CD8-positive, alpha-beta T cell (primary cell): ENCODE measurements at regions of chrX and their contacts with region 1.

Region 1: DNA sequence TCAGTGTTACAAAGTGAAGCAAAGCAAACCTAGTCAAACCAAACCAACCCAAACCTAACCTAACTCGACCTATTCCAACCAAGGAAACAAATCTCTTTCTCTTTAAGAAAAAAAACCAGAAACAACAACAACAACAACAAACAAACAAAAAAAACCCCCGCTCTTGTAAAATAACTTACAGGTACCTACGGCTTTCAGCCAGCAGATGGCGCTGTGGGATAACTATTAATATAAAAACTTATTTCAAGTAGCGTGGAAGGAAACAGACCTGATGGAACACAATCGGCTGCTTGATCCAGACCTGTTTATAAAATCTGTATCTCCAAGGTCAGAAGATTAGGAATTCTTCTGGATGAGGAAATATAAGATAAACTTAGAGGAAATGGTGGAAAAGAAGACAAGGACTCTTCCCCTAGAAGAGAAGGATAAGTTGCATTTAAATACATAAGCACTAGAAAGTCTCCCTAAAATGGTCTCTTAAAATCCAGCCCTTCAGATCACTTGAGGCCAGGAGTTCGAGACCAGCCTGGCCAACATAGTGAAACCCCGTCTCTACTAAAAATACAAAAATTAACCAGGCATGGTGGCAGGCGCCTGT is 34.4 kb upstream of the CDKL5 start:
- DNase-seq: peak; percentile 16 to 80 (median 65)
- ATAC-seq: peak; percentile 42
- H3K4me3 ChIP-seq: no peak overlapping the region
- H3K4me3 Mint-ChIP-seq: no peak overlapping the region
- H3K27ac ChIP-seq: no peak overlapping the region
- H3K27ac Mint-ChIP-seq: no peak overlapping the region
- H3K4me1 ChIP-seq: no peaks in the 10 kb centered on the region
- H3K4me1 Mint-ChIP-seq: peaks cover 2% of the 10 kb centered on the region
- H3K27me3 ChIP-seq: no peaks in the 10 kb centered on the region
- H3K27me3 Mint-ChIP-seq: no peaks in the 10 kb centered on the region
- CTCF ChIP-seq: peak; percentile 64

Region 2: DNA sequence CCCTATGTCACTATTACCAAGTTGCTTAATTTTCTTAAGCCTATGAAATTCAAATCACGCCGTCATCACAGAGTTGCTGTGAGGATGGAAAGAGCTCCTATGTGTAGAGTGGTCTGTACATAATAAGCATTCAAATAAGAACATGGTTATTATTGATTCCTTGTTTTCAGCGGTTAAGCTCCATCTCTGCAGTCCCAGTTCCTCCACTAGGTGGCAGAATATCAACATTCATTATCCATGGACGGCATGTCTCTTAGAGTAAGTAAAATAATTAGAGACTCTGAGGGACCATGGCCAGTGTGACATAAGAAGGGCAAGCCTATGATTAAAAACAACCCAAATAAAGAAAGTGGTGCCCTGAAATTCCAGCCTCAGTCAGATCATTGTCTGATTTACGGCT is 1148.6 kb before region 1 on chrX:
- CTCF ChIA-PET with region 1: no interaction called
- POLR2A ChIA-PET with region 1: no interaction called
- intact Hi-C with region 1: loop called in 1 of 2 experiments (anchors 5 kb)
- DNase-seq: peak in 3 of 9 experiments; percentile 18 to 47 (median 31)
- ATAC-seq: no peak
- H3K4me3 ChIP-seq: no peak overlapping the region
- H3K4me3 Mint-ChIP-seq: no peak overlapping the region
- H3K27ac ChIP-seq: no peak overlapping the region
- H3K27ac Mint-ChIP-seq: no peak overlapping the region
- H3K4me1 ChIP-seq: no peaks in the 10 kb centered on the region
- H3K4me1 Mint-ChIP-seq: no peaks in the 10 kb centered on the region
- H3K27me3 ChIP-seq: no peaks in the 10 kb centered on the region
- H3K27me3 Mint-ChIP-seq: no peaks in the 10 kb centered on the region
- CTCF ChIP-seq: peak; percentile 56

Region 3: GRCh38 chrX:18047491-18047890 is 343.5 kb before region 1 on chrX:
- CTCF ChIA-PET with region 1: no interaction called
- POLR2A ChIA-PET with region 1: no interaction called
- intact Hi-C with region 1: no loop called
- DNase-seq: no peak
- ATAC-seq: no peak
- H3K4me3 ChIP-seq: no peak overlapping the region
- H3K4me3 Mint-ChIP-seq: no peak overlapping the region
- H3K27ac ChIP-seq: no peak overlapping the region
- H3K27ac Mint-ChIP-seq: no peak overlapping the region
- H3K4me1 ChIP-seq: no peaks in the 10 kb centered on the region
- H3K4me1 Mint-ChIP-seq: no peaks in the 10 kb centered on the region
- H3K27me3 ChIP-seq: no peaks in the 10 kb centered on the region
- H3K27me3 Mint-ChIP-seq: no peaks in the 10 kb centered on the region
- CTCF ChIP-seq: no peak

Region 4: GRCh38 chrX:18886344-18887161 is 495.5 kb after region 1 on chrX:
- CTCF ChIA-PET with region 1: no interaction called
- POLR2A ChIA-PET with region 1: no interaction called
- intact Hi-C with region 1: loop called in 1 of 2 experiments (anchors 5 kb)
- DNase-seq: peak; percentile 2 to 67 (median 31)
- ATAC-seq: peak; percentile 47
- H3K4me3 ChIP-seq: peak overlapping the region; percentile 58 to 64
- H3K4me3 Mint-ChIP-seq: peak overlapping the region; percentile 88
- H3K27ac ChIP-seq: peak overlapping the region; percentile 14 to 69
- H3K27ac Mint-ChIP-seq: peak overlapping the region; percentile 91
- H3K4me1 ChIP-seq: peaks cover 27% of the 10 kb centered on the region
- H3K4me1 Mint-ChIP-seq: peaks cover 33% of the 10 kb centered on the region
- H3K27me3 ChIP-seq: no peaks in the 10 kb centered on the region
- H3K27me3 Mint-ChIP-seq: no peaks in the 10 kb centered on the region
- CTCF ChIP-seq: peak; percentile 33

Region 5: DNA sequence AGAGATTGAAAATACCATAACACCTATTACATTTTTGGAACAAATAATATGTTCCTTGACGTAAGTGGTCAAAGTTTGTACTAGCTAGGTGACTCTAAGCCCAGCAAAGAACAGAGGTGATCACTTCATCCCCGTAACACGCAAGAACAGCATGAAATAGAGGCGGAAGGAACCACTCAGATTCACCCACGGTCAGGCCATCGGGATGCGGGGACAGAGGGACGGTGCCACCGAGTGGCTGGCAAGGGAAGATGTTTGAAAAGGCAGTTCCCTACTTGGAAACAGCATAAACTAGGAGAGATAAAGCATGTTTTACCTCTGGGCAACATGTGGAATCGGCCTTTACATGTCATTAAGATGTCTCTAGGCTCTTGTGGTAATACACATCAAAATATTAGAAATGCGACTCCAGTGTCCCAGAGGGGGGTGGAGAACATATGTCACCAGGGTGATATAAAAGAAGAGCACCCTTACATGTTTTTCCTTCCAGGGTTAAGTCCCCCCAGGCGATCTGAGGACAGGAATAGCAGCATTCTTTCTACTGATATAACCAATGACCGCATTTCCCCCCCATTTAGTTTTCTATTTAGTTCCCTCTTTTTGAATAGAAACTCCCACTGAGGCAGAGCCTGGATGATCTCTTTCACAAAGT is 508.9 kb after region 1 on chrX:
- CTCF ChIA-PET with region 1: interaction called, 4 read pairs
- POLR2A ChIA-PET with region 1: no interaction called
- intact Hi-C with region 1: loop called (anchors 1 to 2 kb)
- DNase-seq: peak in 1 of 9 experiments; percentile 15
- ATAC-seq: no peak
- H3K4me3 ChIP-seq: no peak overlapping the region
- H3K4me3 Mint-ChIP-seq: no peak overlapping the region
- H3K27ac ChIP-seq: no peak overlapping the region
- H3K27ac Mint-ChIP-seq: no peak overlapping the region
- H3K4me1 ChIP-seq: no peaks in the 10 kb centered on the region
- H3K4me1 Mint-ChIP-seq: no peaks in the 10 kb centered on the region
- H3K27me3 ChIP-seq: no peaks in the 10 kb centered on the region
- H3K27me3 Mint-ChIP-seq: no peaks in the 10 kb centered on the region
- CTCF ChIP-seq: no peak

Region 6: DNA sequence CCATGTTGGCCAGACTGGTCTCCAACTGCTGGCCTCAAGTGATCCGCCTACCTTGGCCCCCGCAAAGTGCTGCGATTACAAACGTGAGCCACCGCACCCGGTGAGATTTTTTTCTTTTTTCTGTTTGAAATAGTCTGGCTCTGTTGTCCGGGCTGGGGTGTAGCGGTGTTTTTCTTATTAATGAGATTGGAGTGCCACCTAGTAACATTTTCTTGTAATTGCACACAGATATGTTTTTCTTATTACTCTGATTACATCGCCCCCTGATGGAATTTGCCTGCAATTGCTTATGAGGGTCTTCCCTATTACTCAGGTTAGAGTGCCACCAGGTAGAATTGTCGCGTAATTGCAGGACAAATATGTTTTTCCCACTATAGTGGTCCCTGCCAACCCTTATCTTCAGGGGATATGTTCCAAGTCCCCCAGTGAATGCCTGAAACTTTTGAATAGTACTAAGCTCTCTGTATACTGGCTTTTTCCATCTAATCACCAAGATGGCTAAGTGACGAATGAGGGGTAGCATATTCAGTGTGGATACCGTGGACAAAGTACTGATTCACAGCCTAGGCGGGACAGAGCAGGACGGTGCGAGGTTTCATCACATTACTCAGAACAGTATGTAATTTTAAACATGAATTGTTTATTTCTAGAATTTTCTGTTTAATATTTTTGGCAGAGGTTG is 944.0 kb after region 1 on chrX:
- CTCF ChIA-PET with region 1: interaction called, 10 read pairs
- POLR2A ChIA-PET with region 1: no interaction called
- intact Hi-C with region 1: loop called (anchors 1 kb)
- DNase-seq: peak in 3 of 9 experiments; percentile 21 to 53 (median 39)
- ATAC-seq: peak; percentile 21
- H3K4me3 ChIP-seq: no peak overlapping the region
- H3K4me3 Mint-ChIP-seq: no peak overlapping the region
- H3K27ac ChIP-seq: no peak overlapping the region
- H3K27ac Mint-ChIP-seq: no peak overlapping the region
- H3K4me1 ChIP-seq: no peaks in the 10 kb centered on the region
- H3K4me1 Mint-ChIP-seq: no peaks in the 10 kb centered on the region
- H3K27me3 ChIP-seq: no peaks in the 10 kb centered on the region
- H3K27me3 Mint-ChIP-seq: no peaks in the 10 kb centered on the region
- CTCF ChIP-seq: no peak

Region 7: DNA sequence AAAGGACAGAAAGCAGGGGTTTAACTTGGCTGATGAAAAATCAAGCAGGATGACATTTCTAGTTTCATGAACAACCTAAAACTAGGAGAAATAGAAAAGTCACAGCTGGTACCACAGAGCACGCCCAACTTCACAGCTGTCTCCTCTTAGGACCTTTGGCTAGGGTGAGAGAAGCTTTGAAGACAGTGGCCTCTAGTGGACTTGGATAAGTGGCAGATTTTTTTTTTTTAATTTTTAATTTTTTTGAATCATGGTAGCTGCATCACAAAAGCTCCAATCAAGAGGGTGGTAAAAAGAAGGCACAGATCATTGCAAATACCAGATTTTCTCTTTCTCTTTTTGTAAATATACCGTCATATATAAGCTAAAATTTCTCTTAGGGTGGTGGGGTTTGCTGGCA is 1144.4 kb after region 1 on chrX:
- CTCF ChIA-PET with region 1: no interaction called
- POLR2A ChIA-PET with region 1: no interaction called
- intact Hi-C with region 1: loop called in 1 of 2 experiments (anchors 10 kb)
- DNase-seq: no peak
- ATAC-seq: no peak
- H3K4me3 ChIP-seq: no peak overlapping the region
- H3K4me3 Mint-ChIP-seq: no peak overlapping the region
- H3K27ac ChIP-seq: no peak overlapping the region
- H3K27ac Mint-ChIP-seq: peak overlapping the region; percentile 50
- H3K4me1 ChIP-seq: no peaks in the 10 kb centered on the region
- H3K4me1 Mint-ChIP-seq: no peaks in the 10 kb centered on the region
- H3K27me3 ChIP-seq: no peaks in the 10 kb centered on the region
- H3K27me3 Mint-ChIP-seq: no peaks in the 10 kb centered on the region
- CTCF ChIP-seq: no peak